ENCODE measurements at regions of chrX and their contacts with region 1.

Region 1: DNA sequence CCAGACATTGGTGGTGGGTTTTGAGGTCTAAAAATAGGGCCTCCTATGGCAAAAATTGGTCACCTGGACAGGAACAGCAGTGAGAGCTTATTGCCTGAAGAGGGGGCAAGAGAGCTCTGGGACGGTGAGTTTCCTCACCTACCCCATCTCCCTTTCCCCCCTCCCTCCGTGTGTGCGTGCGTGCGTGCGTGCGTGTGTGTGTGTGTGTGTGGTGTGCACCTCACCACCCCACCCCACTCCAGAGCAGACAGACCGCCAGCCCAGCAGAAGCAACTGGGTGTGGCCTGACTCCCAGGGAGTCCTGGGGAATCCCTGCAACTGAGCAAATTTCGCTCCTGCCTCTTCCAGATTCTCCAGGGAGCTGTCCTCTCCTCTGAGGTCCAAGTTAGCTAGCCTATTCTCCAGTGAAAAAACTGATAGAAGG is 44.7 kb downstream of the PRPS1 start:
- DNase-seq: peak; percentile 93

Region 2: DNA sequence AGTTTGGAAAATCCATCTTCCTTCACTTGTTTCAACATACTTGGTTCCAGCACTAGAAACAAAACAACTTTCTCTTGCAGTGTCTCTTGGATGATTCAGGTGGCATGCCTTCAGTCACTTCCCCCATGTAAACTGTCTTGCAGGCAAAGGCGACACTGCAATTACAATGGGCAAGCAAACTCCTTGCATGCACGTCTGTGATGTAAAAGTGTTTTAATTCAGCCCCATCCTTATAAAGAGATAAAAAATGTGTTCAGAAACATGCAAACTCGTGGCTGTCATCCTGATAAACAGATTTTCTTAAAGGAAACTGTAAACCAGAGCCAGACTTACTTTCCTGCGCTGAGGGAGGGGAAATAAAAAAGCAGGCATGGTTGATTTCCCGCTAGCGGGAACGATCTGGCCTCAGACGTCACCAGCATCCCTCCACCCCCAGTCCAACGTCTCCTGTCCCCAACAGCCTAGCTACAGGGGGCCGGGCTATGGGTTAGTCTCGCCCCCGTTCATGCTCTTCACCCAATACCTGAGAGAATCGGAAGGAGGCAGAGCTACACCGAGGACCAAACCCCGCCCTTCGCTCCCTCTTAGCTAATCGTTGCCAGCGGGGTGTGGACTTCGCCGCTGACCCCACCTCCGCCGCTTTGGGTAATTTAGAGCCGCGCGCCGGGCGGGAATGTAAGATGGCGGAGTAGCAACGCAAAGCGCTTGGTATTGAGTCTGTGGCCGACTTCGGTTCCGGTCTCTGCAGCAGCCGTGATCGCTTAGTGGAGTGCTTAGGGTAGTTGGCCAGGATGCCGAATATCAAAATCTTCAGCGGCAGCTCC is 44.9 kb before region 1 on chrX and contains the start of gene PRPS1:
- intact Hi-C with region 1: loop called in 1 of 2 experiments (anchors 2 kb)
- DNase-seq: peak; percentile 96
- total RNA-seq, gene PRPS1: 30.2 to 32.7 TPM

Region 3: DNA sequence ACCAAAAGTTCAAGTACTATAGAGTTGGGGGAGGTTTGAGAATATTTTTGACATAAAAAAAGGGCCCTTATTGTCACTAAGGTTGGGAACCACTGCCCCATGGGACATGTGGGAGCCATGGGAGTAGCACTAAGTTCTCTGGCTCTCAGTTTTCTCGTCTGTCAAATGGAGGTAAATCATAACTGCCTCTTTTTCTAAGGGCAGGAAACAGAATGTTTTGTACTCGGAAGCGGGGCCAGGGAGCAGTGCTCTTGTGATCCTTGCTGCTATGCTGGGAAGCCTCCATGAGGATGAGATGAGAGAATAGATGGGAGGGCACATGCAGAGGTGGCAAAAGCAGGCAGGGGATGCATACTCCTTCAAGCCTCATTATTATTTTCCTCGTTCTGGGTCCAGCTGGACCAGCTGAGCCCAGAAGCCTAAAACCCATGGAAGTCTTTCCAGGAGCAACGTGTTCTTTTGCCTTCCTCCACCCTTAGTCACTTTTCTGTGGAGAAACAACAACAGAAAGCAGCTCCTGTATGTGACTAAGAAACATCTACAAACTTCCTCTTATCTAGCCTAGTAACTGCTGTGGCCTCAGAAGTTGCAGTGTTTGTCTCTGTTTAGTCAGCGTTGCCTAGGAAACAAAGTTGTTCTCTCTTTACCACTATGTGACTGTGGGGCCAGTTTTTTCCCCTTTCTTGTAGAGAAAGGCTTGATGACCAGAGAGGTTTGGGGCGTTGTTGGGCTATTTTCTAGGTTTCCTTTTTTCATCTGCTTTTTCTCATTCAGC is 37.8 kb after region 1 on chrX:
- intact Hi-C with region 1: loop called in 1 of 2 experiments (anchors 5 kb)
- DNase-seq: no peak

Measured in posterior vena cava (tissue), 2 donors.